ENCODE measurements at regions of chr2 and their contacts with region 1.

Region 1: DNA sequence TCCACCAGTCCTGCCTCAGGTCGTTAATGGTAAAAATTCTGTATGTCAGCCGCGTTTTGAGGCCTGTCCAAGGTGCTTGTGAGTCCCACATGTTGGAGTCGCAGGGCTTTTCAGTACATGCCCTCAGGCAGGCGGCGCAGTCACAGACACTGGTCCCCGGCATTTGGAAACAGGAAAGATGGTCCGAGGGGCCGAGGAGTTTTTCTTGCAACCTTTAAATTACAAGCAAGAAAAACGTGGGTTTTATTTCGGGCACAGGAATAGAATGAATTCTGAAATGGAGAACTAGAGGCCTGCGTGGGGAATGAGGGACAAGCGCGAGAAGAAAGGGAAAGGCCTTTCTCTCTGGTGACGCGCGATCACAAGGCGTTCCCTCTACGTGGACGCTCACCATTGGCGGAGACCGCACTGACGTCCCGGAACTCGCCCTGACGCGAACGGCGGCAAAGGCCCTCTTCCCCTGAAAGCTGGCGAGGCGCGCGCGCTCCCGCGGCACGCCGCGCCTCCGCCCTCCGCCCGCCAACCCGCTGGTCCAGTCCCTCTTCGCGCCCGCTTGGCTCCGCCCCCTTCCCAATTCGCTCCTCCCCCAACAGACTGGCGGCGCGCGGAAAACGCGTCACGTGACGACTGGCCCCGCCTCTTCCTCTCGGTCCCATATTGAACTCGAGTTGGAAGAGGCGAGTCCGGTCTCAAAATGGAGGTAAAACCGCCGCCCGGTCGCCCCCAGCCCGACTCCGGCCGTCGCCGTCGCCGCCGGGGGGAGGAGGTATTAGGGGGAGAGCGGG is at the start of gene HNRNPA3:
- DNase-seq: peak; percentile 100
- ATAC-seq: peak; percentile 99
- H3K4me3 ChIP-seq: peak within 1 kb of the TSS; percentile 79 to 82
- H3K27ac ChIP-seq: peak within 1 kb of the TSS; percentile 99
- H3K4me1 ChIP-seq: peaks cover 0 to 2% of the 10 kb centered on the region in 2 donors
- H3K27me3 ChIP-seq: no peaks in the 10 kb centered on the region
- total RNA-seq, gene HNRNPA3: 149 to 178 TPM

Region 2: DNA sequence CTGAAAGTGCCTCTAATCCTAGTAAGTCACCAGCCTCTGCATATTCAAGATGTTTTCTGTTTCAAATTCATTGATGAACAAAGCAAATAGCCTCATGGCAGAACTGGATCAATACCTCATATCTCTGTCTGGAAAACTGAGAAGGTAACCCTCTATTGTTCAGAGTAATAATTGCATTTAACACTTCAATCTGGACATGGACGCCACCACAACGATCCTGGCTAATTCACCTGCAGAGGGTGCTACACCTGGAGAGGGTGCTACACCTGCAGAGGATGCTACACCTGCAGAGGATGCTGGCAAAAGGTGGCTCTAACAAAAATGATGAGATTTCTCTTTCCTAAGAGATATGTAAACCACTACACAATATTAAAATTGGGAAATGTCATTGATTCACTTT is 182.8 kb before region 1 on chr2:
- intact Hi-C with region 1: no loop called
- DNase-seq: no peak
- ATAC-seq: no peak
- H3K4me3 ChIP-seq: no peak overlapping the region
- H3K27ac ChIP-seq: no peak overlapping the region
- H3K4me1 ChIP-seq: no peaks in the 10 kb centered on the region
- H3K27me3 ChIP-seq: no peaks in the 10 kb centered on the region

Region 3: DNA sequence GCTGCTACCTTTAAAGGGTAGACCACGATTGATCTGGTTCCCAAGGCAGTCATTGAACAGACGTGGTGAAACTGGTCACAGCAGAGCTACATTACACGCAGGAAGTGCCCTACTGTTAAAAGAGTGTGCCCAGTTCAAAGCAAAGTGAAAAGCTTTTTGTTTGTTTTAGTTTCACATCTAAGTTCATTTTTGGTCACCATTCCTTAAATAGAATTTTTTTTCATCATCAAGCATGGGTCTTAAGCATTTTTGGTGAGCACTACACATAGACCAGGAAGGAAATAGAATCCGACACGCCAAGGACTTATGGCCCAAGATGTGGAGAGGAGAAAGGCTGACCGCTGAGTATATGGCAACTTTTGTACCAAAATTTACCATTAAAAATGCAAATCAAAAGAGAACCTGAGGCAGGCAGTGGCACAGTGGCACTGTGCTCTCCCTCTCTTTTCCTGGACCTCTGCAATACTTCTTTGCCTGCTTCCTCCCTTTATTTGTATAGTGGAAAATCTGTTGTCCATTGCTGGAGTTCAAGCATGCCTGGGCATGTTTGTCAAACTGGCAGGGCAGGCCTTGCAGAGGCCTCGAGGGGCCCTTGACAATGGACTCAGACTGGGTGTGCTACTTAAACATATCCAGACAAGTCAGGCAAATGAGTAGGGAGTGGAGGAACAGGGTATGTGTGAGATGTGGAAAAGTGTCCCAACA is 42.3 kb before region 1 on chr2:
- intact Hi-C with region 1: loop called (anchors 2 to 5 kb)
- DNase-seq: no peak
- ATAC-seq: no peak
- H3K4me3 ChIP-seq: no peak overlapping the region
- H3K27ac ChIP-seq: peak overlapping the region in 1 of 2 donors; percentile 73
- H3K4me1 ChIP-seq: peaks cover 5 to 8% of the 10 kb centered on the region in 2 donors
- H3K27me3 ChIP-seq: no peaks in the 10 kb centered on the region

Region 4: GRCh38 chr2:177263451-177264208 is 51.3 kb after region 1 on chr2:
- intact Hi-C with region 1: loop called (anchors 1 to 2 kb)
- DNase-seq: peak; percentile 99 to 100
- ATAC-seq: peak; percentile 94
- H3K4me3 ChIP-seq: peak overlapping the region; percentile 90 to 94
- H3K27ac ChIP-seq: peak overlapping the region; percentile 98 to 99
- H3K4me1 ChIP-seq: no peaks in the 10 kb centered on the region
- H3K27me3 ChIP-seq: no peaks in the 10 kb centered on the region

Region 5: DNA sequence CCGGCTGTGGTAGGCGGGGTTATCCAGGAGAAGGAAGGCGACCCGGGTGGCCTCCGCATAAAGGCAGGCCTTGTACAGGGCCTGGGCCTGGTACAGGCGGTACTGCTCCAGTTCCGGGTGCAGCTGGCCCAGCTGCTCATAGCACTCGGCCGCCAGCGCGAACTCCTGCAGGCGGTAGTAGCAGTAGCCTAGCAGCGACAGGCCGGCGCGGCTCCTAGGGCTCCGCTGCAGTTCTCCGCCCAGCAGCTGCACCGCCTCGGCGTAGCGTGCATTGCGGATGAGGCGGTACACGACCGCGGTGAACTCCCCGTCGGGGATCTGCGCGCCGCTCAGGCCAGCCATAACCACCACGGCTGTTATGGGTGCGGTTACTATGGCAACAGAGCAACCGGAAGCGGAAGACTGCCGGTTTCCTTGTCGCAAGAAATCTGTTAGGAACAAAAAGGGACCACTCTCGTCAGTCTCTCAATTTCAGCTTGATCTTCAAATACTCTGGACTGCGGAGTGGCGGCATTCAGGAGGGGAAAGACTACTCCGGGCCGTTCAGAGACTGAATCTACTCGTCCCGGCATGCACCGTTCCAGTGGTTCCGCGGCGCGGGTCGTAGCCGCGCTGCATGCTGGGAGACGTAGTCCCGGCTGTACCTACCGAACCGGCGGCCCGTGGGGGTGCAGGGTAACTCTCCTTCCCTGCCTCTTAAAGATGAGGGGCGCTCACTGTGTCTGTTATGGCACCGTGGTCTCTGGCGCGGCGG is 340.3 kb after region 1 on chr2:
- intact Hi-C with region 1: loop called in 1 of 2 experiments (anchors 5 kb)
- DNase-seq: peak; percentile 92 to 95
- ATAC-seq: peak; percentile 98
- H3K4me3 ChIP-seq: peak overlapping the region; percentile 73 to 86
- H3K27ac ChIP-seq: peak overlapping the region; percentile 31 to 92
- H3K4me1 ChIP-seq: no peaks in the 10 kb centered on the region
- H3K27me3 ChIP-seq: no peaks in the 10 kb centered on the region

Measured in aorta (tissue), 5 donors.